A549 (cell line): ENCODE measurements at regions of chr19 and their contacts with region 1.

Region 1: DNA sequence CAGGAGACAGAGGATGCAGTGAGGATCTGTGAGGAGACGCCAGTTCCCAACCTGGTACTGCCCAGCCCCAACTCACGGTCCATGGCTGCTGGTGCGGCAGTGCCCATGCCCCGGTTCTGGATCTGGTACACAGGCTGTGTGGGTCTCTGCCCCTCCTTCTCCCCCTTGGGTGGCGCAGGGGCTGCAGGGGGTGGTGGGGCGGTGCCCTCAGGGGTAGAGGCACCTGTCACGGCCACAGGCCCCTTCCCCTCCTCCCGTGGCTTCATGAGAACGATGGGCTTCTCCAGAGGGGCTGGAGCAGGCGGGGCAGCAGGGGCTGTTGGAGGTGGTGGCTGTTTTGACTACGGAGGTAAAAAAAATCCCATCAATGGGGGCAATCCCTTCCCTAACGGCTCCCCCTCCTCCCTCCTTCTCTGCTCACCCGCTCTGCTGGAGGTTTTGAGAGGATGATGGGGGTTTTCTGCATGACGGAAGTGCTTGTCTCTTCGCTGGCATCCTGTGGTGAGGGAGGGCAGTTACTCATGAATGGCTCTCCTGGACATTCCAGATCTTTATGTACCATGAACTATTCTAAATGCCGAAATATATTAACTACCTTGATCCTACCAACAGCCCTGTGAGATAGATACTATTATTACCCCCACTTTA is 7.1 kb downstream of the SMG9 start:
- DNase-seq: no peak
- ATAC-seq: 0 out of 6 replicates have a peak, but pooled peaks of 1 of the 2 experiments have one; percentile 26
- H3K4me3 ChIP-seq: no peak overlapping the region
- H3K27ac ChIP-seq: no peak overlapping the region
- H3K4me1 ChIP-seq: peaks cover 13% of the 10 kb centered on the region
- CTCF ChIP-seq: no peak
- EP300 ChIP-seq: no peak
- POLR2A ChIP-seq: no peak
- RAD21 ChIP-seq: no peak

Region 2: DNA sequence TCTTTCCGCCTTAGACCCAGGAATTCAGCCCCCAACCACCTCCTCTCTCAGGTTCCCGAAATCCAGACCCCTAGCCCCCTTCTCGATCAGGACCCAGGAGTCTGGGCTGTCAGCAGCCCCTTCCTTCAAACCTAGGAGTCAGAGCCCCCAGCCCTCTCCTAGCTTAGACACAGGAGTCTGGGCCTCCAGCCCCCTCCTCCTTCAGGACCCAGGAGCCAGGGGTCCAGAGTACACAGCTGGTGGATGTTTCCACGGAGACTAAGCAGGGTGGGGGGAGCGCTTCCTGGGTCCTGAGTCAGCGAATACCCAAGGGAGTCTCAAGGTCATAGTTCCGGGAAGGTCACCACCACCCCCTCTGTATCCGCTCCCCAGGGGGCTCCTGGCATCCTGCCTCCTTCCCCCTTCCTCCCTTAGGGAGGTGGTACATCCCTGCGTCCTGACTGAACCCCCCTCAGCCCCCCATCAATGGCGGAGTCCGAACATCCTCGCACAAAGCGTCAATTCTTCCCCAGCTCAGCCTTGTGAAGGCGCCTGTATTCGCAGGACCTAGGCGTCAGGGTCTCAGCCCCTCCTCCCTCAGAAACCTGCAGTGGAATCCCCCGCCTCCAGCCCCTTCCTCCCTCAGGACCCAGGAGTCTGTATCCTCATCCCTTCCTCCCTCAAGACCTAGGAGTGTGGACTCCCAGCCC is 112.7 kb before region 1 on chr19:
- CTCF ChIA-PET with region 1: no interaction called
- POLR2A ChIA-PET with region 1: no interaction called
- DNase-seq: no peak
- ATAC-seq: no peak
- H3K4me3 ChIP-seq: no peak overlapping the region
- H3K27ac ChIP-seq: peak overlapping the region in 1 of 2 experiments; percentile 68; a peak in 3 of 6 replicates
- H3K4me1 ChIP-seq: peaks cover 24% of the 10 kb centered on the region
- CTCF ChIP-seq: no peak
- EP300 ChIP-seq: no peak
- POLR2A ChIP-seq: no peak
- RAD21 ChIP-seq: no peak

Region 3: DNA sequence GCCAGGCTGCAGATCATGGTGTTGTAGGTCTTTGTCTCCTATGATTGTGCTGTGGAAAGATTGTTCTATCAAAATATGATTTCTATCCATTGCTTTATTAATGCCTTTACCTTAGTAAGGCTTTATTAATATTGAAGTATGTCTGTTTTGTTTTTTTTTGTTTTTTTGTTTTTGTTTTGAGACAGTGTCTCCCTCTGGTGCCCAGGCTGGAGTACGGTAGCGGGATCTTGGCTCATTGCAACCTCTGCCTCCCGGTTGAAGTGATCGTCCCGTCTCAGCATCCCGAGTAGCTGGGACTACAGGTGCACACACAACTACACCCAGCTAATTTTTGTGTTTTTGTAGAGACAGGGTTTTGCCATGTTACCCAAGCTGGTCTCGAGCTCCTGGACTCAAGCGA is 24.1 kb before region 1 on chr19:
- CTCF ChIA-PET with region 1: interaction called, 11 read pairs
- POLR2A ChIA-PET with region 1: no interaction called
- DNase-seq: peak in 1 of 2 experiments; percentile 46
- ATAC-seq: peak in 1 of 2 experiments; percentile 36; a peak in 2 of 6 replicates
- H3K4me3 ChIP-seq: no peak overlapping the region
- H3K27ac ChIP-seq: no peak overlapping the region
- H3K4me1 ChIP-seq: no peaks in the 10 kb centered on the region
- CTCF ChIP-seq: peak; percentile 48
- EP300 ChIP-seq: no peak
- POLR2A ChIP-seq: no peak
- RAD21 ChIP-seq: peak; percentile 63 to 66

Region 4: DNA sequence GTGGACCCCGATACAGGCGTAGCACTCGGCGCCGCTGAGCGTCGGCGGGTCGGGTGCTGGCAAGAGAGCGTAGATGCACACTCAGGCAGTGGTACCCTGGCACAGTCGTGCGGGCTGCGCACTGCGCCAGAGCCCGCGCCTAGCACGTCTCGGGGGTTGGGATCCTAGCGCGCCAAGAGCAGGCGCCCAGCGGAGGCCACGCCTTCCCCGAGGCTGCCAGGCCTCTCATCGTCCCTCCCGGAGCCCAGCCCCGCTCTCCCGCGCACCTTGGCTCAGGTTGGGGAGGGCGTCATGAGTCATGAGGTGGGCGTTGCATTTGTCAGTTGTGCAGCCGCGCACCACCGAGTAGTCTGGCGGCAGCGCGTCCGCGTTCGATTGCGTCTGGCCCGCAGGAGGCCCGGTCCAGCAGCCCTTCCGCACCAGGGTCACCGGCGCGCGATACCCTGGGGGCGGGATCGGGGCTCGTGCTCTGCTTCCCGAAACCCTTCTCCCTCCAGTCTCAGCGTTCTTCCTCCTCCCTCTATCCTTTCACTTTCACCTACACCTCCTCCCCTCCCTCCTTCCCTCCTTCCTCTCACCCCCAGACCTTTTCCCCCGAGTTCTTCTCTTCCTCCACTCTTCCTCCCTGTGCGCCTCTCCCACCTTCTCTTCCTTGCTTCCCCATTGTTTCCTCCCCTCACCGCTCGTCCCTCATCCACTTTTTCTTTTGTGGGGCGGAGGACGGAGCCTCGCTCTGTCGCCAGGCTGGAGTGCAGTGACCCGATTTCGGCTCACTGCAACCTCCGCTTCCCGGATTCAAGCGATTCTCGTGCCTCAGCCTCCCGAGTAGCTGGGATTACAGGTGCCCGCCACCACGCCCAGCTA is 51.1 kb after region 1 on chr19:
- CTCF ChIA-PET with region 1: interaction called, 565 read pairs
- POLR2A ChIA-PET with region 1: no interaction called
- DNase-seq: peak in 1 of 2 experiments; percentile 30
- ATAC-seq: peak; percentile 37 to 75; a peak in 5 of 6 replicates
- H3K4me3 ChIP-seq: peak overlapping the region; percentile 40
- H3K27ac ChIP-seq: peak overlapping the region in 1 of 2 experiments; percentile 12; a peak in 2 of 6 replicates
- H3K4me1 ChIP-seq: 0 out of 3 replicates have a peak, but pooled peaks cover 4% of the 10 kb centered on the region
- CTCF ChIP-seq: no peak
- EP300 ChIP-seq: no peak
- POLR2A ChIP-seq: no peak
- RAD21 ChIP-seq: no peak

Region 5: DNA sequence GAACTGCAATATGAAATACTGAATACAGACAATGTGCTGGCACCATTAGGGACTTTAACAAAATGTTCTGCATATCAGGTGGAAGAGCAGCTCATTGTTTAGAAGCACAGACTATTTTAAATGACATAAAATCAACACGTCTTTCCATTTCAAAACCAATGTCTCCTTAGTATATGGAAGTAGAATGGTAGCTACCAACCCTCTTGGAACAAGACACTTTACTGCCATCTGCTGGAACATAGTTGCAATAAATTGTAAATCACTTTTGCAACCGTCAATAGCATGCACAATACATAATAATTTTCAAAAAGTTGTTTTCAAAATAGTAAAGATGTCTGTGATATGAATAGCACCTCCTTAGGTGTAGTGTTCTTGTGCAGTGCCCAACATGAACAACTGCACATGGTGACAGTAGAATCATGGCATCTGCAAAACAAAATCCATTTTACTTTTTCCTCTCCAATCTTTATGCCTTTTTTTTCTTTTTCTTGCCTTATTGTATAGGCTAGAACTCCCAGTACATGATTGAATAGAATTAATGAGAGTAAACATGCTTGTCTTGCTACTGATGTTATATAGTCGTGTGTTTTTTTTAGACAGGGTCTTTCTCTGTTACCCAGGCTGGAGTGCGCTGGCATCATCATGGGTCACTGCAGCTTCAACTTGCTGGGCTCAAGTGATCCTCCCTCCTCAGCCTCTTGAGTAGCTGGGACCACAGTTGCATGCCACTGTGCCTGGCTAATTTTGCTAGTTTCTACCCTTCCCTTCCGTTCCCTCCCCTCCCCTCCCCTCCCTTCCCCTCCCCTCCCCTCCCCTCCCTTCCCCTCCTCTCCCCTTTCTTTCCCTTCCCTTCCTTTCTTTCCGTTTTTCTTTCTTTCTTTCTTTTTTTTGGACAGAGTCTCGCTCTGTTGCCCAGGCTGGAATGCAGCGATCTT is 62.3 kb after region 1 on chr19:
- CTCF ChIA-PET with region 1: interaction called, 19 read pairs
- POLR2A ChIA-PET with region 1: no interaction called
- DNase-seq: peak; percentile 46 to 82
- ATAC-seq: peak; percentile 74 to 90
- H3K4me3 ChIP-seq: no peak overlapping the region
- H3K27ac ChIP-seq: no peak overlapping the region
- H3K4me1 ChIP-seq: no peaks in the 10 kb centered on the region
- CTCF ChIP-seq: peak; percentile 75
- EP300 ChIP-seq: no peak
- POLR2A ChIP-seq: no peak
- RAD21 ChIP-seq: peak; percentile 72 to 90

Region 6: GRCh38 chr19:43934985-43935708 is 187.5 kb after region 1 on chr19 and contains the start of gene ZNF45:
- CTCF ChIA-PET with region 1: no interaction called
- POLR2A ChIA-PET with region 1: no interaction called
- DNase-seq: peak; percentile 93 to 97
- ATAC-seq: peak; percentile 99 to 100
- H3K4me3 ChIP-seq: peak within 1 kb of the TSS; percentile 66
- H3K27ac ChIP-seq: peak within 1 kb of the TSS; percentile 81 to 89
- H3K4me1 ChIP-seq: no peaks in the 10 kb centered on the region
- CTCF ChIP-seq: no peak
- EP300 ChIP-seq: no peak
- POLR2A ChIP-seq: peak; percentile 56
- RAD21 ChIP-seq: no peak
- polyA plus RNA-seq, gene ZNF45: 19.9 and 20.9 TPM in 2 replicates